HepG2 (cell line): ENCODE measurements at regions of chr1 and their contacts with region 1.

Region 1: DNA sequence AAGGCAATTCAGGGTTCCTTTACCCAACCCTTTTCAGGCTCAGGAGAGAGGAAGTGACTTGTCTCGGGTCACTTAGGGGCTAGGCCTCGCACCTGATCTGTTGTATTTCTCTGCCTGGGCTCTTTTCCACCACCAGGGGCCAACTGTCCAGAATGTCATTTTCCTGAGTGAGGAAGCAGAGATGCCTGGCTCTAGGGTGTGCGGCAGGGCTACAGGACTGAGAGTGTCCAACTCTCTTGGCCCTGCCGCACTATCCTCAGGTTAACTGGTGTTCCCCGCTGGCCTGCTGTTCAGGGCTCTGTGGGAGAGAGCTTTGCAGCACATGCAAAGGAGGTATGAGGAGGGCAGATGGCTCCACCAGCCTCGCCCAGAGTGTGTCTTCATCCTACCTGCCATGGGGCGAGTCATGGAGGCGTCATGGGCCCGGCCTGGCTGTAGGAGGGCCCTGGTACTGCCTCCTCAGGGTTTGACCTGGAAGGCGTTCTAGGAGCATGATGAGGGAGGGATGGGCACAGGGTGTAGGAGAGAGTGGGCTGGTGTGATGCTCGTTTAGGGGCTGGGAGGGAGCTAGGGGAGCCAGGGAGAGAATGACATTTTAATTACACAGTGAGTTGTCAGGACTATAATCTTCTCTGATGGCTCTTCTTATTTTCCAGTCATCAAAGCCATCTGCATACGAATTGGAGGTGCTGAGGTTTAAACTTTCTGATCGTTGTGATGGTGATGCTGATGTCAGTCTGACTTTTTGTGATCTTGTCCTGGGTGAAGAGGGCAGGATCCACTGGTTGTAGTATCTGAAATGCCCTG is 128.3 kb downstream of the NOS1AP start:
- DNase-seq: peak; percentile 62
- ATAC-seq: peak; percentile 90
- H3K4me3 ChIP-seq: peak overlapping the region; percentile 35 to 55 (median 45); a peak in 5 of 6 replicates
- H3K27ac ChIP-seq: peak overlapping the region; percentile 77
- H3K4me1 ChIP-seq: peaks cover 58% of the 10 kb centered on the region
- H3K27me3 ChIP-seq: no peaks in the 10 kb centered on the region
- CTCF ChIP-seq: peak; percentile 50
- EP300 ChIP-seq: no peak
- POLR2A ChIP-seq: no peak
- RAD21 ChIP-seq: peak; percentile 58

Region 2: GRCh38 chr1:161915051-161915503 is 282.7 kb before region 1 on chr1:
- CTCF ChIA-PET with region 1: no interaction called
- POLR2A ChIA-PET with region 1: no interaction called
- in situ Hi-C with region 1: no loop called
- intact Hi-C with region 1: no loop called
- DNase-seq: no peak
- ATAC-seq: no peak
- H3K4me3 ChIP-seq: no peak overlapping the region
- H3K27ac ChIP-seq: no peak overlapping the region
- H3K4me1 ChIP-seq: peaks cover 27% of the 10 kb centered on the region
- H3K27me3 ChIP-seq: no peaks in the 10 kb centered on the region
- CTCF ChIP-seq: no peak
- EP300 ChIP-seq: no peak
- POLR2A ChIP-seq: no peak
- RAD21 ChIP-seq: no peak

Region 3: DNA sequence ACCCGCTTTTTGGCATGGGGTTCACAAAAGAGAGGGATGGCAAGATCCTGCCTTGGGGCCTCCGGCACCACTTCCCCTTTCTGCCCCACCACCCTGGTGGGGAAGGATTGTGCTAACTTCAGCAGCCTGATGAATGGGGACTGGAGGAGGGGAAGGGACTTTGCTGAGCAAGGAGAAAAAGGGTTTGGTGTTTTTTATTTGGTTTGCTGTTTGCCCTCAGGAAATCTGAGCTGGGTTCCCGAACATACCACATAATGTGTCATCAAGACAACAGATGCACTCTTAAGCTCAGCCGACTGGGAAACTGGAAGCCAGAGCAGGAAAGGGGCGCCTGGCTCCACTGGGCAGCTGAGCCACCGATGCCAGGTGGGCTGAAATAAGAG is 194.0 kb before region 1 on chr1:
- CTCF ChIA-PET with region 1: no interaction called
- POLR2A ChIA-PET with region 1: no interaction called
- in situ Hi-C with region 1: no loop called
- intact Hi-C with region 1: no loop called
- DNase-seq: no peak
- ATAC-seq: no peak
- H3K4me3 ChIP-seq: no peak overlapping the region
- H3K27ac ChIP-seq: no peak overlapping the region
- H3K4me1 ChIP-seq: no peaks in the 10 kb centered on the region
- H3K27me3 ChIP-seq: peaks cover 6 to 40% of the 10 kb centered on the region in 2 experiments; a peak in 4 of 5 replicates
- CTCF ChIP-seq: no peak
- EP300 ChIP-seq: no peak
- POLR2A ChIP-seq: no peak
- RAD21 ChIP-seq: no peak

Region 4: DNA sequence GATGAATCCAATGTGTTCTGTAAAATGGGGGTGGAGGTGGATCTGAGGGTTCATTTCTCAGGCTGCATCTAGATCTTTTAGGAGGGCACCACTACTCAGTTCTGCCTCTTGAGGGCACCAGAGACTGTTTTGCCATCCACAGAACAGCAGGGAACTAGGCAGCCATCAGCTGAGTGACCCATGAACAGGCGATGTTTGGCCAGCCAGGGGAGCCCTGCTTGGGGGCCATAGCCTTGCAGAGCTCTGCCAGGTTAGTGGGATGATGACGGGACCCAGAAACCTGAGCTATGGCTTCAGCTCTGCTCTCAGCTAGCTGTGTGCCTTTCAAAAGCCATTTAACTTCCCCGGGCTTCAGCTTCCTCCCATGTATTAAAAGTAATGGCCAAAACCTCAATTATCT is 141.8 kb before region 1 on chr1:
- CTCF ChIA-PET with region 1: no interaction called
- POLR2A ChIA-PET with region 1: no interaction called
- in situ Hi-C with region 1: no loop called
- intact Hi-C with region 1: loop called (anchors 2 kb)
- DNase-seq: peak; percentile 70
- ATAC-seq: peak; percentile 98
- H3K4me3 ChIP-seq: no peak overlapping the region
- H3K27ac ChIP-seq: no peak overlapping the region
- H3K4me1 ChIP-seq: peaks cover 16% of the 10 kb centered on the region
- H3K27me3 ChIP-seq: no peaks in the 10 kb centered on the region
- CTCF ChIP-seq: peak; percentile 96
- EP300 ChIP-seq: no peak
- POLR2A ChIP-seq: no peak
- RAD21 ChIP-seq: peak; percentile 96

Region 5: DNA sequence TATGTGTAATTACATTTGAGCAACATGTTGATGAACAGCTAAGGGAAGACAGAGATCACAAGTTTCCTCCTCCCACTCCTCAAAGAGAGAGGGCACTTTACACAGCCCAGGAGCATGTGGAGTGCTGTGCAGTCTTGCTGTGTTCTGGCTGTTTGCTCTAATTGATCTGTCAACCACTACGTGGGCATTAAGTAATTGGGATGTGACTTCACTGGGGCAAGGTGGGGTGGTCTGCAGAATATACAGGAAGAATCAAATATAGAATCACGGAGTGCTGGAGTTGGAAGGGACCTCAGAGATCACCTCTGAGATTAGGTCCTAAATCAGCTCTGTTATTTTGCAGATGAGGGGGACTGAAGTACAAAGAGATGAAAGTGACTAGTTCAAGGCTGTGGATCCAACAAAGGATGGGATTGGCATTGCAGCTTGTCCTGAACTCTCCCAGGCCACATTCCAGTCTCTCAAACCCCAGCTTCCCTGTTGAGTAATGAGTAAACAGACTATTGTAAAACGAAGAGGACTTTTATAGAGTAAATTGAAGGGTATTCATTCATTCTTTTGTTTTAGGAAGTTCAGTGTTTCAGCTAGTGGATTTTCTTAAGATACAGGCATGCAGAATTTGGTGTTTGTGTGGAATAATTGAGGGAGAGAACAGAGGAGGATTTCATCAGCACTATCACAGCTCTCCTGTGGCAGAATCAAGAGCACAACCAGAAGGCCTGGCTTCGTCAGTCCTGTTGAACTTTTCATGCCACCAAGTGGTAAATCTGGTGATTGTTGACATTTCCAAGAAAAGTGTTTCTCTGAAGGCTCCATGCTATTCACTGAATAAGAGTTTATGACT is 105.9 kb before region 1 on chr1:
- CTCF ChIA-PET with region 1: no interaction called
- POLR2A ChIA-PET with region 1: interaction called, 9 read pairs
- in situ Hi-C with region 1: no loop called
- intact Hi-C with region 1: loop called (anchors 5 kb)
- DNase-seq: peak; percentile 97
- ATAC-seq: peak; percentile 96
- H3K4me3 ChIP-seq: peak overlapping the region; percentile 8 to 50 (median 29); a peak in 4 of 6 replicates
- H3K27ac ChIP-seq: peak overlapping the region; percentile 71
- H3K4me1 ChIP-seq: peaks cover 81% of the 10 kb centered on the region
- H3K27me3 ChIP-seq: no peaks in the 10 kb centered on the region
- CTCF ChIP-seq: no peak; the same call in 1 of the 2 replicates
- EP300 ChIP-seq: peak; percentile 53 to 94; a peak in 3 of 4 replicates
- POLR2A ChIP-seq: no peak
- RAD21 ChIP-seq: no peak; the same call in 1 of the 2 replicates

Region 6: GRCh38 chr1:162133566-162133965 is 64.3 kb before region 1 on chr1:
- CTCF ChIA-PET with region 1: no interaction called
- POLR2A ChIA-PET with region 1: interaction called, 12 read pairs
- in situ Hi-C with region 1: no loop called
- intact Hi-C with region 1: loop called (anchors 5 kb)
- DNase-seq: no peak
- ATAC-seq: no peak
- H3K4me3 ChIP-seq: no peak overlapping the region
- H3K27ac ChIP-seq: no peak overlapping the region
- H3K4me1 ChIP-seq: peaks cover 98% of the 10 kb centered on the region
- H3K27me3 ChIP-seq: no peaks in the 10 kb centered on the region
- CTCF ChIP-seq: no peak
- EP300 ChIP-seq: no peak
- POLR2A ChIP-seq: no peak
- RAD21 ChIP-seq: no peak

Region 7: GRCh38 chr1:162145280-162145965 is 52.4 kb before region 1 on chr1:
- CTCF ChIA-PET with region 1: no interaction called
- POLR2A ChIA-PET with region 1: interaction called, 11 read pairs
- in situ Hi-C with region 1: no loop called
- intact Hi-C with region 1: no loop called
- DNase-seq: peak; percentile 56
- ATAC-seq: peak; percentile 87
- H3K4me3 ChIP-seq: peak overlapping the region; percentile 27 to 63 (median 43)
- H3K27ac ChIP-seq: peak overlapping the region; percentile 85
- H3K4me1 ChIP-seq: peaks cover 85% of the 10 kb centered on the region
- H3K27me3 ChIP-seq: no peaks in the 10 kb centered on the region
- CTCF ChIP-seq: no peak
- EP300 ChIP-seq: no peak
- POLR2A ChIP-seq: no peak
- RAD21 ChIP-seq: no peak

Region 8: GRCh38 chr1:162213281-162213912 is 15.6 kb after region 1 on chr1:
- CTCF ChIA-PET with region 1: no interaction called
- POLR2A ChIA-PET with region 1: interaction called, 4 read pairs
- in situ Hi-C with region 1: no loop called
- intact Hi-C with region 1: loop called (anchors 2 kb)
- DNase-seq: peak; percentile 86
- ATAC-seq: peak; percentile 77
- H3K4me3 ChIP-seq: peak overlapping the region in 1 of 3 experiments; percentile 7; a peak in 1 of 6 replicates
- H3K27ac ChIP-seq: peak overlapping the region; percentile 39
- H3K4me1 ChIP-seq: peaks cover 33% of the 10 kb centered on the region
- H3K27me3 ChIP-seq: no peaks in the 10 kb centered on the region
- CTCF ChIP-seq: no peak
- EP300 ChIP-seq: no peak
- POLR2A ChIP-seq: no peak
- RAD21 ChIP-seq: no peak

Region 9: GRCh38 chr1:162235241-162235800 is 37.5 kb after region 1 on chr1:
- CTCF ChIA-PET with region 1: no interaction called
- POLR2A ChIA-PET with region 1: interaction called, 3 read pairs
- in situ Hi-C with region 1: no loop called
- intact Hi-C with region 1: loop called (anchors 5 kb)
- DNase-seq: peak; percentile 91
- ATAC-seq: peak; percentile 87
- H3K4me3 ChIP-seq: no peak overlapping the region
- H3K27ac ChIP-seq: peak overlapping the region; percentile 39
- H3K4me1 ChIP-seq: peaks cover 81% of the 10 kb centered on the region
- H3K27me3 ChIP-seq: no peaks in the 10 kb centered on the region
- CTCF ChIP-seq: no peak
- EP300 ChIP-seq: peak; percentile 35 to 77; a peak in 2 of 4 replicates
- POLR2A ChIP-seq: no peak
- RAD21 ChIP-seq: no peak